CD8-positive, alpha-beta T cell (primary cell): ENCODE measurements at regions of chr9 and their contacts with region 1.

Region 1: DNA sequence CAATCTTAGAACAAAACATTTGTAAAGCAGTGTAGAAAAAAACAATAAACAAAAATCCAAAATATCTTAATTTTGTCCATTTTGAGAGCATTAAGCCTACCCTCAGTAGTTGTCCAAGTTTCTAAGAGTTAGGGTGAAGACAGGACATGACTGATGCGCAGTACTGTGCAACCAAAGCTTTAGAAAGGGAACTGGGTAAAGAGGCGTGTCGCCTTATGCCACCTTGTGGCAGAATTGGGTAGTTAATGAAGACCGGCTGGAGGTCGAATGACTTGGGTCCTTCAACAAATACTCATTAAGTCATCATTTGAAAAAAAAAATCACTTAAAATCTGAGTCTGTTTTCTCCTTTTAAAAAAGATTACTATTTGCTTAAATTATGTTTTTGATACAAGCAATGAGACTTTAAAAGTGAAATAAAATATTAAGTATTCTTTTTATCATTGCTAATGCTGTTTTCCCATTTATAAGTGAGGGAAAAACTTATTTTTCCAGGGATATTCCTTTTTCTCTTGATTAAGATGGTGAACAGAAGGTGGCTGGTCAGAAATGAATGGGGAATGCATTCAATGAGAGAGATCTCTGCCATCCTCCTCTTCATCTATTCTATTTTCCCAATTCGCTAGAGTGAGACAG is 3.5 kb upstream of the RNF20 start:
- DNase-seq: peak; percentile 36 to 83 (median 65)
- ATAC-seq: peak; percentile 33
- H3K4me3 ChIP-seq: no peak overlapping the region
- H3K4me3 Mint-ChIP-seq: no peak overlapping the region
- H3K27ac ChIP-seq: no peak overlapping the region
- H3K27ac Mint-ChIP-seq: no peak overlapping the region
- H3K4me1 ChIP-seq: peaks cover 14% of the 10 kb centered on the region
- H3K4me1 Mint-ChIP-seq: peaks cover 20% of the 10 kb centered on the region
- H3K27me3 ChIP-seq: no peaks in the 10 kb centered on the region
- H3K27me3 Mint-ChIP-seq: peaks cover 10% of the 10 kb centered on the region
- CTCF ChIP-seq: peak; percentile 86

Region 2: GRCh38 chr9:101326501-101326900 is 203.7 kb before region 1 on chr9:
- CTCF ChIA-PET with region 1: no interaction called
- POLR2A ChIA-PET with region 1: no interaction called
- intact Hi-C with region 1: no loop called
- DNase-seq: no peak
- ATAC-seq: no peak
- H3K4me3 ChIP-seq: no peak overlapping the region
- H3K4me3 Mint-ChIP-seq: no peak overlapping the region
- H3K27ac ChIP-seq: no peak overlapping the region
- H3K27ac Mint-ChIP-seq: no peak overlapping the region
- H3K4me1 ChIP-seq: no peaks in the 10 kb centered on the region
- H3K4me1 Mint-ChIP-seq: no peaks in the 10 kb centered on the region
- H3K27me3 ChIP-seq: no peaks in the 10 kb centered on the region
- H3K27me3 Mint-ChIP-seq: peaks cover 5% of the 10 kb centered on the region
- CTCF ChIP-seq: no peak

Region 3: DNA sequence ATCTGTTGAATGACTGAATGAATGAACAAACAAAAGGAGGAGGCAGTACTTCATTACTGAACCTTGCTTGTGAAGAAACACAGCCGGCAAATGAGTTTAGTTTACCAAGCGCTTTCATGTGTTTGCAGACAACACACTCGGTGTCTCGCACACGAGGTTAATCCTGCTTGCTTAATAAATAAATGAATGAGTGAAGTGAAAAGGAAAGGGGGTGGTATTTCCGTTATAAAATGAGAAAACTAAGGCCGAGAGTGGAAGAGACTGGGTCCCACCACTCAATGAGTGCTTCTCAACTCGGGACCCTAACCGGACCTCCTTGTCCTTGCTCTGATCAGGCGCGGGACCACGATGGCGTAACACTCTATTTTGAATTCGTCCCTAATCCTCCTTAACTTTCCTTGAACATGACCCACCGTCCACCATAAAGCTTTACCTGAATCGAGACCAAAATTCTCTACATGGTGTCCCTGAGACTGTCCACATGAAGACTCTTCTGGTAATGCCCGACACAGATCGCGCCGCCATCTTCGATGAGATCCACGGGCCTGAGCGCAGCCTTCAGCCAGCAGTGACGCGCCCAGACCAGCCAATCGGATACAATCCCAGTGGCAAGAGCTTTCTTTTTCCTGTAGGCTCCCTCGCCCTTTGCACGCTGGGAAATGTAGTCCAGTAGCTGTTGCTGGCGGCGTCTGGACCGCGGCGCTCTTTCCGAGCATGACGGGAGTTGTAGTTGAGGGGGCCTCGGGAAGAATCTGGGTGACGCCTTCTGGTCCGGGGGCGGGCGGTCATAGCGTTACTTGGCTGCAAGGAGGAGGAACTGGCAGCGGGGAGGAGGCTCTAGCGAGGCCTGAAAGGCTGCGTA is 131.9 kb before region 1 on chr9 and contains the starts of genes MRPL50 and ZNF189:
- CTCF ChIA-PET with region 1: interaction called, 4 read pairs
- POLR2A ChIA-PET with region 1: interaction called, 19 read pairs
- intact Hi-C with region 1: loop called (anchors 1 kb)
- DNase-seq: peak; percentile 89 to 99 (median 95)
- ATAC-seq: peak; percentile 93
- H3K4me3 ChIP-seq: peak within 1 kb of the TSS; percentile 87 to 91
- H3K4me3 Mint-ChIP-seq: peak within 1 kb of the TSS; percentile 97
- H3K27ac ChIP-seq: peak within 1 kb of the TSS; percentile 96 to 98
- H3K27ac Mint-ChIP-seq: peak within 1 kb of the TSS; percentile 99
- H3K4me1 ChIP-seq: peaks cover 54% of the 10 kb centered on the region
- H3K4me1 Mint-ChIP-seq: peaks cover 80% of the 10 kb centered on the region
- H3K27me3 ChIP-seq: no peaks in the 10 kb centered on the region
- H3K27me3 Mint-ChIP-seq: no peaks in the 10 kb centered on the region
- CTCF ChIP-seq: no peak
- total RNA-seq, gene MRPL50: 7.5 to 8.4 TPM
- total RNA-seq, gene ZNF189: 4.0 to 5.2 TPM

Region 4: GRCh38 chr9:101449140-101449721 is 81.0 kb before region 1 on chr9:
- CTCF ChIA-PET with region 1: interaction called, 11 read pairs
- POLR2A ChIA-PET with region 1: interaction called, 5 read pairs
- intact Hi-C with region 1: loop called (anchors 1 to 2 kb)
- DNase-seq: peak; percentile 21 to 66 (median 50)
- ATAC-seq: peak; percentile 97
- H3K4me3 ChIP-seq: peak overlapping the region; percentile 39 to 46
- H3K4me3 Mint-ChIP-seq: peak overlapping the region; percentile 70
- H3K27ac ChIP-seq: no peak overlapping the region
- H3K27ac Mint-ChIP-seq: no peak overlapping the region
- H3K4me1 ChIP-seq: no peaks in the 10 kb centered on the region
- H3K4me1 Mint-ChIP-seq: peaks cover 11% of the 10 kb centered on the region
- H3K27me3 ChIP-seq: peaks cover 0 to 12% of the 10 kb centered on the region in 2 experiments
- H3K27me3 Mint-ChIP-seq: peaks cover 52% of the 10 kb centered on the region
- CTCF ChIP-seq: peak; percentile 60

Region 5: DNA sequence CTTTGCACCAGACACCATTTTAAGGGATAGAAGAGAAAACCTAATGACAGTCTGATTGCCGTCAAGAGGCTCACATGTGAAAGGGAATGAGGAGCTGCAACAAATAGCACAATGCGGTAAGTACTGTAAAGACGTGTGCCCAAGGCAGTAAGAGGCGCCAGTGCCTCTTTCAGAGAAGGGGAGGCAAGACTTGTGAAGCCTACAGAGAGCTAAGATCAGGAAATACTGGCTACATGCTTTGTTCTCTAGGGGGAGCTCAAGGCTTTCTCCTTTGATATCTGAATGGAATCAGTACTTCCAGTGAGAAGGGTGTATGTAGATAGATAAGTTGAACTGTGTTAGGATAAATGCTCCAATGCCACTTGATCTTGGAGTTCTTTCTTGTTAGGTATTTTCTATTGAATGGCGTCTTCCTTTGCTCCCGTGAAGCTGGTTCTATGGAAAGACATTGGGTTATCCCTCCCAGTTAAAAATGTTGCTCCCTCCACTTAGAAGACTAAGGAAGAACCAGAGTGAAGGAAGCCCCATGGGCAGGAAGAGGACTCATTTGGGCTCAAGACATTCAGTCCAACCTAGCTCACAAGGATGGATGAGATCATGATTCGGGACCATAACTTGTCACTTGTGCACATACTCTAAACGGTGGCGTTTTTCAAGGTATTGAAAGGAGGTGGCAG is 71.1 kb before region 1 on chr9:
- CTCF ChIA-PET with region 1: interaction called, 22 read pairs
- POLR2A ChIA-PET with region 1: no interaction called
- intact Hi-C with region 1: loop called (anchors 1 kb)
- DNase-seq: peak in 3 of 9 experiments; percentile 5 to 60 (median 45)
- ATAC-seq: peak; percentile 62
- H3K4me3 ChIP-seq: no peak overlapping the region
- H3K4me3 Mint-ChIP-seq: no peak overlapping the region
- H3K27ac ChIP-seq: no peak overlapping the region
- H3K27ac Mint-ChIP-seq: no peak overlapping the region
- H3K4me1 ChIP-seq: no peaks in the 10 kb centered on the region
- H3K4me1 Mint-ChIP-seq: no peaks in the 10 kb centered on the region
- H3K27me3 ChIP-seq: no peaks in the 10 kb centered on the region
- H3K27me3 Mint-ChIP-seq: peaks cover 28% of the 10 kb centered on the region
- CTCF ChIP-seq: peak; percentile 19

Region 6: GRCh38 chr9:101566904-101567724 is 36.9 kb after region 1 on chr9:
- CTCF ChIA-PET with region 1: interaction called, 6 read pairs
- POLR2A ChIA-PET with region 1: interaction called, 7 read pairs
- intact Hi-C with region 1: loop called in 1 of 2 experiments (anchors 1 kb)
- DNase-seq: peak in 5 of 9 experiments; percentile 35 to 59 (median 38)
- ATAC-seq: no peak
- H3K4me3 ChIP-seq: no peak overlapping the region
- H3K4me3 Mint-ChIP-seq: no peak overlapping the region
- H3K27ac ChIP-seq: no peak overlapping the region
- H3K27ac Mint-ChIP-seq: peak overlapping the region; percentile 5
- H3K4me1 ChIP-seq: peaks cover 43% of the 10 kb centered on the region
- H3K4me1 Mint-ChIP-seq: peaks cover 50% of the 10 kb centered on the region
- H3K27me3 ChIP-seq: no peaks in the 10 kb centered on the region
- H3K27me3 Mint-ChIP-seq: no peaks in the 10 kb centered on the region
- CTCF ChIP-seq: peak; percentile 46